Activated CD4-positive, alpha-beta T cell treated with anti-CD3 and anti-CD28 coated beads for 36 hours (primary cell): ENCODE measurements at regions of chr6 and their contacts with region 1.

Region 1: DNA sequence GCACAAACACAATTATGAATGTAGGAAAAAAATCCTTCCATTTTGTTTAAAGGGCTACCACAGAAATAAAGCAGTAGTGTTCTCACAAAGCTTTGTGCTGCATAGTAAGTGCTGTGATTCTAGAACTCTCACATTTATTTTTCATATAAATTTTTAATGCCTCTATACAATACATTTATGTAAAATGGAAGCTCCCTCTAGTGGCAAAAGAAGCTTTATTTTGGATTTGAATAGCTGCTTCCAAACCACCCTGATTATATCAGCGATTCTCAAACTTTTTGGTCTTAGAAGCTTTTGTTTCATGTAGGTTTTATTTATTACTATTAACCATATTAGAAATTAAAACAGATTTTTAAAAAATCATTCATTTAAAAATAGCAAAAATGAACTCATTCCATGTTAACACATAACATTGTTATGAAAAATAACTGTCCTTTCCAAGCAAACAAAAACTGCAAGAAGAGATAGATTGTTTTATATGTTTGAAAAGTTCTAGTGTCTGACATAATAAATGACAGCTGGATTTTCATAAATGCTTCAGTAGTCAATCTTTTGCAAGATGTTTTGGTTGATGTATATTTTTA is 38.4 kb downstream of the HS3ST5 start:
- DNase-seq: no peak
- ATAC-seq: no peak
- H3K4me3 Mint-ChIP-seq: no peak overlapping the region
- H3K27ac Mint-ChIP-seq: no peak overlapping the region
- H3K4me1 Mint-ChIP-seq: no peaks in the 10 kb centered on the region
- H3K27me3 Mint-ChIP-seq: peaks cover 2% of the 10 kb centered on the region

Region 2: GRCh38 chr6:114096561-114097172 is 207.7 kb before region 1 on chr6:
- CTCF ChIA-PET with region 1: interaction called, 3 read pairs
- POLR2A ChIA-PET with region 1: no interaction called
- intact Hi-C with region 1: loop called (anchors 1 to 2 kb)
- DNase-seq: no peak
- ATAC-seq: no peak
- H3K4me3 Mint-ChIP-seq: no peak overlapping the region
- H3K27ac Mint-ChIP-seq: no peak overlapping the region
- H3K4me1 Mint-ChIP-seq: no peaks in the 10 kb centered on the region
- H3K27me3 Mint-ChIP-seq: peaks cover 4% of the 10 kb centered on the region